CD4-positive, alpha-beta T cell (primary cell): ENCODE measurements at regions of chr4 and their contacts with region 1.

Region 1: GRCh38 chr4:48779998-48780742 is at the start of gene FRYL:
- DNase-seq: peak; percentile 91 to 100 (median 96)
- ATAC-seq: peak; percentile 84
- H3K4me3 ChIP-seq: peak within 1 kb of the TSS; percentile 81
- H3K4me3 Mint-ChIP-seq: peak within 1 kb of the TSS; percentile 93
- H3K27ac ChIP-seq: peak within 1 kb of the TSS; percentile 83 to 91
- H3K27ac Mint-ChIP-seq: peak within 1 kb of the TSS; percentile 84
- H3K4me1 ChIP-seq: peaks cover 18% of the 10 kb centered on the region
- H3K4me1 Mint-ChIP-seq: peaks cover 55% of the 10 kb centered on the region
- H3K27me3 ChIP-seq: no peaks in the 10 kb centered on the region
- H3K27me3 Mint-ChIP-seq: no peaks in the 10 kb centered on the region
- CTCF ChIP-seq: no peak
- total RNA-seq, gene FRYL: 86.1 to 87.7 TPM

Region 2: GRCh38 chr4:47510506-47511143 is 1269.5 kb before region 1 on chr4:
- CTCF ChIA-PET with region 1: no interaction called
- POLR2A ChIA-PET with region 1: no interaction called
- intact Hi-C with region 1: no loop called
- DNase-seq: peak in 3 of 14 experiments; percentile 23 to 35 (median 23)
- ATAC-seq: no peak
- H3K4me3 ChIP-seq: no peak overlapping the region
- H3K4me3 Mint-ChIP-seq: no peak overlapping the region
- H3K27ac ChIP-seq: no peak overlapping the region
- H3K27ac Mint-ChIP-seq: no peak overlapping the region
- H3K4me1 ChIP-seq: no peaks in the 10 kb centered on the region
- H3K4me1 Mint-ChIP-seq: peaks cover 12% of the 10 kb centered on the region
- H3K27me3 ChIP-seq: no peaks in the 10 kb centered on the region
- H3K27me3 Mint-ChIP-seq: no peaks in the 10 kb centered on the region
- CTCF ChIP-seq: no peak

Region 3: DNA sequence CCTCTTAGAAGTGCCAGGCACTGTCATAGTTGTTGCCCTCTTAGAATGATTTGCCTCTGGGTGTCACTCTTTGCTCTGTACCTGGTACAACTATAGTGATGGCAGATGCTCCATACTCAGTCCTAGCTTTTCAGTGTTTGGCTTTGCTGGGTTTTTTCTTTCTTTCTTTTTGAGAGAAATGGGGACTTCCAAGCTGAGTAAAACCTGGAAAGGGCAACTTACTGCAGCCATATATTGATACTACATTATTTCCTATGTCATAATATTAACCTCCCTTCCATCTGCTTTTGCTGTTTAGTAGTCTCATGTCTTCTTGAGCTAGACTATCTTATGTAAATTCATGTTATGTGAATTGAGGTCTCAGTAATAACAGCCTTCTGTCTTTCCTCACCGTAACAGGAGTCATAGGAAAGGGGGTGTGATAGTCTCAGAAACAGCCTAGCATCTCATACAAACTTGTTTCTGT is 714.5 kb before region 1 on chr4:
- CTCF ChIA-PET with region 1: no interaction called
- POLR2A ChIA-PET with region 1: no interaction called
- intact Hi-C with region 1: no loop called
- DNase-seq: no peak
- ATAC-seq: no peak
- H3K4me3 ChIP-seq: no peak overlapping the region
- H3K4me3 Mint-ChIP-seq: no peak overlapping the region
- H3K27ac ChIP-seq: no peak overlapping the region
- H3K27ac Mint-ChIP-seq: no peak overlapping the region
- H3K4me1 ChIP-seq: no peaks in the 10 kb centered on the region
- H3K4me1 Mint-ChIP-seq: no peaks in the 10 kb centered on the region
- H3K27me3 ChIP-seq: no peaks in the 10 kb centered on the region
- H3K27me3 Mint-ChIP-seq: no peaks in the 10 kb centered on the region
- CTCF ChIP-seq: no peak

Region 4: DNA sequence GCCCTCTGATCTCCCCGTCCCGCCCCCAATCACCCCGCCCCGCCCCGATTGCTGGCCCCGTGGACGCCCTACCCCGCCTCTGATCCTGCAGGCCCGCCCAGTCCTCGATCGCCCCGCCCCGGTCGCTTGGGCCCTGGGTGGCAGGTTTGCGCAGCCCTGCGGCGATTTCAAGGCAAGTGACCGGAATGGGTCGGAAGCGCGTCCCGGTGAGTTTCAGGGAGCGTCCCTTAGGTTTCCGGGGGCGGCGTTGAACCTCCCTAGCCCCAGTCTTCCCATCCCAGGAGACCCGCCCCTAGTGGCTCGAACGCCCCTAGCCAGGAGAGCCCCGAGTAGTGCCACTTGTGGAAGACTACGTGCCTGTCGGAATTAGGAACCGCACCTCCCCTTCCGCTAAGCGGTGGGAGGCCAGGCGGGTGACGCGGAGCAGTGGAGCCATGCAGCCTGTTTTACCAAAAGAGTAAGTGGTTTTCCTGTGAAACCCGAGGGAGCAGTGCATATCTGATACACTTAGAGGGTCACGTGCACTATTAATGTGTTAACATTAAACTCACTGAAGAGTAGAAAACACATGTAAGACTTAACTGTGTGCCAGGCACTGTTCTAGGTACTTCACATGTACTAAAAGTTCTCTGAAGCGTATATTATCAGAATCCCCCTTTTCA is 510.2 kb before region 1 on chr4:
- CTCF ChIA-PET with region 1: no interaction called
- POLR2A ChIA-PET with region 1: no interaction called
- intact Hi-C with region 1: no loop called
- DNase-seq: peak; percentile 73 to 91 (median 80)
- ATAC-seq: peak; percentile 87
- H3K4me3 ChIP-seq: peak overlapping the region; percentile 87
- H3K4me3 Mint-ChIP-seq: peak overlapping the region; percentile 98
- H3K27ac ChIP-seq: peak overlapping the region in 1 of 2 donors; percentile 55
- H3K27ac Mint-ChIP-seq: peak overlapping the region; percentile 79
- H3K4me1 ChIP-seq: peaks cover 19% of the 10 kb centered on the region
- H3K4me1 Mint-ChIP-seq: peaks cover 29% of the 10 kb centered on the region
- H3K27me3 ChIP-seq: no peaks in the 10 kb centered on the region
- H3K27me3 Mint-ChIP-seq: no peaks in the 10 kb centered on the region
- CTCF ChIP-seq: peak; percentile 46

Region 5: DNA sequence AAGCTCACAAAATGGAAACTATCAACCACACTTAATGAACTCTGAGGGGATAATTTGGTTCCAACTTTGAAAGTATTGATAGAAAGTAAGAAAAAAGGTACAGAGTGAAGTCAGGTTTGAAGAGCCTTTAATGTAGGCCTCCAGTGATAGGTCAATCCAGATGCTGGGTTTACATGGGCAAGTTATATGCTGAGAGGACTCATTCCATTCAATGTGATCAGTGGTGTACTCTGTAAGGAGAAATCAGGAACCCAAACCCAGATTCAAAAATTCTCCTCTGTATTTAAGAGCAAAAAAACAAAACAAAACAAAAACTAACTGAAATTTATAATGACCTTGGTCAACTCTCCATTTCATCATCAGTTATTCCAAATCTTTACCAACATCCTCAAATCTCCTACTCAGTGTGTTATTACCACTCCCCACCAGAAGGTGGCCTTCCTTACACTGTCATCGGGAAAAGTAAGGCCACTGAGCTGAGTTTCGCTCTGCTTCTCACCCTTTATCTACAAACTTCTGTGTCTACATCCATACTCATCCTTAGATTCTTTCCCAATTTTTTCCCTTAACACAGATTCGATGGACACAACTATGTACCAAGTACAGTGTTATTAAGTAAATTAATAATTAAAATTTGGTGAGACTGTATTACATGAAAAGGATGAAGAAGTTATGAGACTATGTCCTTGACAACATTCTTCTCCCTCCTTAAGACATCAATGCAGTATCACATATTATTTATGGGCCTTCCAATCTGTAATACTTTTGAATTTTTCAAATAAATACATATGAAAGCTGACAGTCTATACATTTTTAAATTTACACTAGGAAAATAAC is 201.8 kb before region 1 on chr4:
- CTCF ChIA-PET with region 1: interaction called, 4 read pairs
- POLR2A ChIA-PET with region 1: interaction called, 7 read pairs
- intact Hi-C with region 1: loop called (anchors 2 kb)
- DNase-seq: peak in 13 of 14 experiments; percentile 4 to 79 (median 34)
- ATAC-seq: peak; percentile 97
- H3K4me3 ChIP-seq: no peak overlapping the region
- H3K4me3 Mint-ChIP-seq: no peak overlapping the region
- H3K27ac ChIP-seq: no peak overlapping the region
- H3K27ac Mint-ChIP-seq: peak overlapping the region; percentile 1
- H3K4me1 ChIP-seq: no peaks in the 10 kb centered on the region
- H3K4me1 Mint-ChIP-seq: no peaks in the 10 kb centered on the region
- H3K27me3 ChIP-seq: no peaks in the 10 kb centered on the region
- H3K27me3 Mint-ChIP-seq: no peaks in the 10 kb centered on the region
- CTCF ChIP-seq: peak; percentile 95

Region 6: DNA sequence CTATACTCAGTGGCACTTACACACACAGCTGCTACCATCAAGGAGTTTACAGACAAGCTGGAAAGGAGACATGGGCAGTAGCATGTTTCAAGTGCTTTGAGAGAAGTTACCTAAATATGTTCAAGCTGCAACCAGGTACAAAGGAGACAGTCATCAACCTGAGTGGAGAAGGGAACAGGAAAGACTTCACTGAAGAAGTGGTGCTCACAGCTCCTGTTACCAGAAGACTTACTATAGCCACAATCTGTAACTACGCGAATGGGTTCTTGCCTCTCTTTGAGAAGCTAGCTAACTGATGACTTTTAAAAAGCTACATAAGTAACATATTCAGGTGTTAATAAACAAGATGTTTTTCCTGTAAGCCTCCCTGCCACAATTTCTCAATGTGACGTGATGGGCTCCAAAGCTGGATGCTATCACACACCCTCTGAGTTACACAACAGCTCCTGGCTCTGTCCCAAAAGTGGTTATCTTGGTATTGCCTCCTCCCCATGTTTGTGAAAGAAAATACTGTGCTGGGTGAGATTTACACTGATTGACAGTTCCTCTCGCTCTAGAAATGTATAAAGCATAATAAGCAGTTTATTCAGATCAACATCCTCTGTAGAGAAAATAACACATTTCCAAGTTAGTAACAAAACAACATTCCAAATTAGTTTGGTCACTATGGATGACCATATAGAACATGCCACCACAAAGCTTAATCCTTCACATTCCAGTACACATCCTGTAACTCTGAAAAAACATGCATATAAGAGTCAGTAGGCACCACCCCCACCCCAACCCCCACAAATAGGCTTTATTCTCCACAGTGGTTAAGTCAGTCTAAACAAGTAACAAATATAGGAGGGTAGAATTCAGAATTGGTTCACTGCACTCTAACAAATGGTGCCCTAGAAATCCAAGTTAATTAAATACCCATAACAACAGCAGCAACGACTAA is 81.9 kb before region 1 on chr4:
- CTCF ChIA-PET with region 1: interaction called, 3 read pairs
- POLR2A ChIA-PET with region 1: interaction called, 9 read pairs
- intact Hi-C with region 1: loop called (anchors 5 kb)
- DNase-seq: peak in 2 of 14 experiments; percentile 11 to 16
- ATAC-seq: peak; percentile 34
- H3K4me3 ChIP-seq: no peak overlapping the region
- H3K4me3 Mint-ChIP-seq: peak overlapping the region; percentile 5
- H3K27ac ChIP-seq: no peak overlapping the region
- H3K27ac Mint-ChIP-seq: peak overlapping the region; percentile 19
- H3K4me1 ChIP-seq: peaks cover 3% of the 10 kb centered on the region
- H3K4me1 Mint-ChIP-seq: peaks cover 77% of the 10 kb centered on the region
- H3K27me3 ChIP-seq: no peaks in the 10 kb centered on the region
- H3K27me3 Mint-ChIP-seq: no peaks in the 10 kb centered on the region
- CTCF ChIP-seq: no peak

Region 7: GRCh38 chr4:48727666-48728459 is 52.3 kb before region 1 on chr4:
- CTCF ChIA-PET with region 1: no interaction called
- POLR2A ChIA-PET with region 1: interaction called, 18 read pairs
- intact Hi-C with region 1: loop called (anchors 5 to 10 kb)
- DNase-seq: no peak
- ATAC-seq: no peak
- H3K4me3 ChIP-seq: no peak overlapping the region
- H3K4me3 Mint-ChIP-seq: peak overlapping the region; percentile 2
- H3K27ac ChIP-seq: no peak overlapping the region
- H3K27ac Mint-ChIP-seq: peak overlapping the region; percentile 80
- H3K4me1 ChIP-seq: peaks cover 32% of the 10 kb centered on the region
- H3K4me1 Mint-ChIP-seq: peaks cover 95% of the 10 kb centered on the region
- H3K27me3 ChIP-seq: no peaks in the 10 kb centered on the region
- H3K27me3 Mint-ChIP-seq: no peaks in the 10 kb centered on the region
- CTCF ChIP-seq: no peak

Region 8: DNA sequence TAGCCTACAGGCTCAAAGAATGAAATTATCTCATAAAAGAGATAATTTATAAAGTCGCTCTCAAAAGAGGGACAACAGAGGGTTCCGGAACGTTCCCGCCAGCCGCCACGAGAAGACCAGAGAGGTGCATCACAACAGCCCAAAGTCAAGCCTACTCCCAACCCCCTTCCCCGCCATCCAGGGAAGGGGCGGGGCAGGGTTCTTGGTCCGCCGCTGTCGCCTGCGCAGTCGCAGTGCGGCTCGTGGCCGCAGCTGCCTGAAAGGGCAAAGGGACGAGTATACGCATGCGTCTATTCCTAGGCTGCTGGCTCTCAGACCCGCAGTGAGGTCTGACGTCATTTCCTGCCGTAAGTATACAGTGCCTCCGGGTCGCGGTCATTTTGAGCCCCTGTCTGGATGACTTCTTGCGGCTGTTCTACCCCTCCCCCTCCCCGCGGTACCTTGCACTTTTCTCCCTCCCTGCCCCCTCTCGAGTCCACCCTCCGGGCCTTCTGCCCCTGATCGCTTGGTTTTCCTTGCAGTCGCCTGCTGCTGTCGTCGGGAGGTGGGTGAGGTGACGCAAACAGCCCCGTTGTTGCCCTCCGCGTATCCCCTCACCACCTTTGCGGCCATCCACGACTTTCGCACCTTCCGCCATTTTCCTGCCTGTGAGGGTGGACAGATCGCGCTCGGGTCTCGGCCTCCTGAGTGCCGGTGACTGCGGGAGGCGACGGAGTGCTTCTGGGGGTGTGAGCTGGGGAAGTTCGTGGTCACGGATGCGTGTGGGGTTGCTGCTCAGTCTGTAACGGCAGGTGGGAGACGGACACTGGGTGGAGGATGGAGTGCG is 50.7 kb after region 1 on chr4 and contains the start of gene OCIAD1:
- CTCF ChIA-PET with region 1: no interaction called
- POLR2A ChIA-PET with region 1: interaction called, 51 read pairs
- intact Hi-C with region 1: loop called (anchors 1 to 2 kb)
- DNase-seq: peak; percentile 82 to 100 (median 91)
- ATAC-seq: peak; percentile 94
- H3K4me3 ChIP-seq: peak within 1 kb of the TSS; percentile 68
- H3K4me3 Mint-ChIP-seq: peak within 1 kb of the TSS; percentile 100
- H3K27ac ChIP-seq: peak within 1 kb of the TSS; percentile 93
- H3K27ac Mint-ChIP-seq: peak within 1 kb of the TSS; percentile 100
- H3K4me1 ChIP-seq: peaks cover 13% of the 10 kb centered on the region
- H3K4me1 Mint-ChIP-seq: peaks cover 32% of the 10 kb centered on the region
- H3K27me3 ChIP-seq: no peaks in the 10 kb centered on the region
- H3K27me3 Mint-ChIP-seq: peaks cover 10% of the 10 kb centered on the region
- CTCF ChIP-seq: no peak
- total RNA-seq, gene OCIAD1: 85.7 to 89.9 TPM

Region 9: GRCh38 chr4:48924416-48924815 is 144.2 kb after region 1 on chr4:
- CTCF ChIA-PET with region 1: no interaction called
- POLR2A ChIA-PET with region 1: no interaction called
- intact Hi-C with region 1: no loop called
- DNase-seq: no peak
- ATAC-seq: no peak
- H3K4me3 ChIP-seq: no peak overlapping the region
- H3K4me3 Mint-ChIP-seq: no peak overlapping the region
- H3K27ac ChIP-seq: no peak overlapping the region
- H3K27ac Mint-ChIP-seq: no peak overlapping the region
- H3K4me1 ChIP-seq: peaks cover 8% of the 10 kb centered on the region
- H3K4me1 Mint-ChIP-seq: peaks cover 5% of the 10 kb centered on the region
- H3K27me3 ChIP-seq: no peaks in the 10 kb centered on the region
- H3K27me3 Mint-ChIP-seq: no peaks in the 10 kb centered on the region
- CTCF ChIP-seq: no peak

Region 10: DNA sequence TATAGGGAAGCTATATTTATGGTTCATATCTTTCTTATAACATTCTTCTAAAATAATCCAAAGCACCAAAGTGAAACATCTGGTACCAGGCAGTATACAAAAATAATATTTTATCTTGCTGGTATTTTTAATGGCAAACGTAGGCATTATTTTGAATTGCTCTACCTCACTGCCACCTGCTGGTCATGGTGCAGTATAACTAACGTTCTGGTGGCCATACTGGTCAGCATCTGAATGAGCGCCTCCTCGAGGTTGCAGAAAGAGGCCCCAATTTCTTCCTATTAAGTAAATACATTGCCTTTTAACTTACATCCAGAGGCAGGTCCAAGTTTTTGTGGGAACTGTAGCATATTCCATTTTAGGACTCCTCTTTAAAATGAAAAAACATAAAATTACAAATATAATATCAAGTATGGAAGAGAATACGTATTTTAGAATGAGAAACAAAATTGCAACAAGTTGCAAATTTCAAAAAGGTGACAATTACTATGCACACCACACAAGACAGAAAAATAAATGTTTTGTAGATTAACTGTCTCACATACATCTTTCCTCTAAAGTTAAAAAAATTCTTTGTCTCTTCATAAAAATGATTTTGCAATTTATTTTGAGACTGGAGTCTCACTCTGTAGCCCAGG is 183.0 kb after region 1 on chr4:
- CTCF ChIA-PET with region 1: interaction called, 3 read pairs
- POLR2A ChIA-PET with region 1: interaction called, 3 read pairs
- intact Hi-C with region 1: loop called (anchors 5 kb)
- DNase-seq: peak; percentile 56 to 89 (median 68)
- ATAC-seq: peak; percentile 100
- H3K4me3 ChIP-seq: no peak overlapping the region
- H3K4me3 Mint-ChIP-seq: no peak overlapping the region
- H3K27ac ChIP-seq: no peak overlapping the region
- H3K27ac Mint-ChIP-seq: no peak overlapping the region
- H3K4me1 ChIP-seq: no peaks in the 10 kb centered on the region
- H3K4me1 Mint-ChIP-seq: no peaks in the 10 kb centered on the region
- H3K27me3 ChIP-seq: no peaks in the 10 kb centered on the region
- H3K27me3 Mint-ChIP-seq: no peaks in the 10 kb centered on the region
- CTCF ChIP-seq: peak; percentile 99